ENCODE measurements at regions of chr17 and their contacts with region 1.

Region 1: DNA sequence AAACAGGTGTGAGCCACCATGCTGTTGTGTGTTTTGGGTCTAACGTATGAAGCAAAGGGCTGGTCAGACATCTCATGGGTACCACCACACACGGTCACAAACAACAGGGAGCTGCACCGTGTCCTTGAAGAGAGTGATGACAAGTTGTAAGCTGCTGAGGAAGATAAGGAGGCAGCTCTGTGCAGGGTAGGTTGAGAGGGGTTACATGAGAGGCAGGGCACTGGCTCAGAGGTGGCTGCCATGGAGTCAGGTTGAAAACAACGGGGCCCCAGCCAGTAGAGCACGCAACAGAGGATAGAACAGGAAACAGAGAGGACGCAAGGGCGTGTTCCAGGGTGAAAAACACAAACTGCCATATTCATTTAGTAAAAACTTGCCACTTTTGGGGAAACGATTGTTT is 52.2 kb downstream of the TRARG1 start:
- DNase-seq: peak; percentile 47
- ATAC-seq: peak; percentile 73
- H3K4me3 Mint-ChIP-seq: no peak overlapping the region
- H3K27ac Mint-ChIP-seq: peak overlapping the region; percentile 50
- H3K4me1 Mint-ChIP-seq: peaks cover 10% of the 10 kb centered on the region
- H3K27me3 Mint-ChIP-seq: peaks cover 5% of the 10 kb centered on the region

Region 2: GRCh38 chr17:915538-916201 is 416.0 kb before region 1 on chr17:
- CTCF ChIA-PET with region 1: no interaction called
- POLR2A ChIA-PET with region 1: no interaction called
- DNase-seq: no peak
- ATAC-seq: no peak
- H3K4me3 Mint-ChIP-seq: no peak overlapping the region
- H3K27ac Mint-ChIP-seq: no peak overlapping the region
- H3K4me1 Mint-ChIP-seq: no peaks in the 10 kb centered on the region
- H3K27me3 Mint-ChIP-seq: peaks cover 9% of the 10 kb centered on the region

Region 3: GRCh38 chr17:1260086-1260769 is 71.5 kb before region 1 on chr17:
- CTCF ChIA-PET with region 1: interaction called, 35 read pairs
- POLR2A ChIA-PET with region 1: no interaction called
- DNase-seq: no peak
- ATAC-seq: no peak
- H3K4me3 Mint-ChIP-seq: no peak overlapping the region
- H3K27ac Mint-ChIP-seq: no peak overlapping the region
- H3K4me1 Mint-ChIP-seq: peaks cover 44% of the 10 kb centered on the region
- H3K27me3 Mint-ChIP-seq: peaks cover 20% of the 10 kb centered on the region

Region 4: DNA sequence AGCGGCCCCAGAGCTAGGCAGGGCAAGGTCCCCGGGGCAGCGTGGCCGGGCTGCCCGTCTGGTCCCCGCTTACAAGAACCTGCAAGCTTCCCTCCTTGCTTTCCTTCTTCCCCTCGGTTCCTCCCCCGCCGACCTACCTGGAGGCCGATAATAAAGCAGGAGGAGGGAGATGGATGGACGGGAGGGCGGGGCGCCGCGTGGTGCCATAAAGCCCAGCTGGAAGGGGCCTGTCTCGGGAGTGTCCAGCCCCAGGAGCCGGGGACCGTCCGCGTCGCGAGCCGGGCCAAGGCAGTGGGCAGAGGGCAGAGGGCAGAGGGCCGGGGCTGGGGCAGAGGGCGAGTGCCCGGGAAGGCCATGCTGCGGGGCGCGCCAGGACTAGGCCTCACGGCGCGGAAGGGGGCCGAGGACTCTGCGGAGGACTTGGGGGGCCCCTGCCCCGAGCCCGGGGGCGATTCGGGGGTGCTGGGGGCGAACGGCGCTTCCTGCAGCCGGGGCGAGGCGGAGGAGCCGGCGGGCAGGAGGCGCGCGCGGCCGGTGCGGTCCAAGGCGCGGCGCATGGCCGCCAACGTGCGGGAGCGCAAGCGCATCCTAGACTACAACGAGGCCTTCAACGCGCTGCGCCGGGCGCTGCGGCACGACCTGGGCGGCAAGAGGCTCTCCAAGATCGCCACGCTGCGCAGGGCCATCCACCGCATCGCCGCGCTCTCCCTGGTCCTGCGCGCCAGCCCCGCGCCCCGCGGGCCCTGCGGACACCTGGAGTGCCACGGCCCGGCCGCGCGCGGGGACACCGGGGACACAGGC is 61.3 kb before region 1 on chr17 and contains the start of gene BHLHA9:
- CTCF ChIA-PET with region 1: interaction called, 10 read pairs
- POLR2A ChIA-PET with region 1: no interaction called
- DNase-seq: no peak
- ATAC-seq: no peak
- H3K4me3 Mint-ChIP-seq: peak within 1 kb of the TSS; percentile 85
- H3K27ac Mint-ChIP-seq: no peak within 1 kb of the TSS
- H3K4me1 Mint-ChIP-seq: peaks cover 16% of the 10 kb centered on the region
- H3K27me3 Mint-ChIP-seq: peaks cover 44% of the 10 kb centered on the region
- total RNA-seq, gene BHLHA9: not detected

Region 5: GRCh38 chr17:1275962-1276736 is 55.6 kb before region 1 on chr17:
- CTCF ChIA-PET with region 1: interaction called, 45 read pairs
- POLR2A ChIA-PET with region 1: no interaction called
- DNase-seq: peak; percentile 80
- ATAC-seq: peak; percentile 87
- H3K4me3 Mint-ChIP-seq: peak overlapping the region; percentile 46
- H3K27ac Mint-ChIP-seq: peak overlapping the region; percentile 48
- H3K4me1 Mint-ChIP-seq: peaks cover 10% of the 10 kb centered on the region
- H3K27me3 Mint-ChIP-seq: peaks cover 24% of the 10 kb centered on the region

Region 6: DNA sequence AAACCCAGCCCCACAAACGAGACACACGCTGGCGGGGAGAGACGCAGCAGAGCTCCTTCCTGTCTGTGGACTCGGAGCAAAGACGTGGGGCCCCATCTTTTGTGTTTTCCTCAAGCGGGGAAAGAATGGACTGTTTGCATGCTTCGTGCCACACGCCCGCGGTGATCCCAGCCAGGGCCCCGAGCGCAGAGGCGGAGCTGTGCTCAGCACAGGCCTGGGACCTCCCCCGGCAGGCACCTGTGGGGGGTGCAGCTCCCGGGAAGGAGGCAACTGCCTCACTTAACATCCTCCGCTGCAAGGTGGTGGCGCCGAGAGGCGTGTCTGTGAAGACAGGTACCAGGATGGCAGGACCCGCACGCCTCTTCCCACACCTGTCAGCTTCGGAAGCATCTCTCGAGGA is 33.1 kb before region 1 on chr17:
- CTCF ChIA-PET with region 1: interaction called, 13 read pairs
- POLR2A ChIA-PET with region 1: no interaction called
- DNase-seq: peak; percentile 59
- ATAC-seq: peak; percentile 45
- H3K4me3 Mint-ChIP-seq: peak overlapping the region; percentile 36
- H3K27ac Mint-ChIP-seq: peak overlapping the region; percentile 46
- H3K4me1 Mint-ChIP-seq: peaks cover 60% of the 10 kb centered on the region
- H3K27me3 Mint-ChIP-seq: peaks cover 12% of the 10 kb centered on the region

Region 7: GRCh38 chr17:1413281-1413791 is 81.6 kb after region 1 on chr17:
- CTCF ChIA-PET with region 1: no interaction called
- POLR2A ChIA-PET with region 1: no interaction called
- DNase-seq: no peak
- ATAC-seq: no peak
- H3K4me3 Mint-ChIP-seq: no peak overlapping the region
- H3K27ac Mint-ChIP-seq: no peak overlapping the region
- H3K4me1 Mint-ChIP-seq: no peaks in the 10 kb centered on the region
- H3K27me3 Mint-ChIP-seq: no peaks in the 10 kb centered on the region

Region 8: DNA sequence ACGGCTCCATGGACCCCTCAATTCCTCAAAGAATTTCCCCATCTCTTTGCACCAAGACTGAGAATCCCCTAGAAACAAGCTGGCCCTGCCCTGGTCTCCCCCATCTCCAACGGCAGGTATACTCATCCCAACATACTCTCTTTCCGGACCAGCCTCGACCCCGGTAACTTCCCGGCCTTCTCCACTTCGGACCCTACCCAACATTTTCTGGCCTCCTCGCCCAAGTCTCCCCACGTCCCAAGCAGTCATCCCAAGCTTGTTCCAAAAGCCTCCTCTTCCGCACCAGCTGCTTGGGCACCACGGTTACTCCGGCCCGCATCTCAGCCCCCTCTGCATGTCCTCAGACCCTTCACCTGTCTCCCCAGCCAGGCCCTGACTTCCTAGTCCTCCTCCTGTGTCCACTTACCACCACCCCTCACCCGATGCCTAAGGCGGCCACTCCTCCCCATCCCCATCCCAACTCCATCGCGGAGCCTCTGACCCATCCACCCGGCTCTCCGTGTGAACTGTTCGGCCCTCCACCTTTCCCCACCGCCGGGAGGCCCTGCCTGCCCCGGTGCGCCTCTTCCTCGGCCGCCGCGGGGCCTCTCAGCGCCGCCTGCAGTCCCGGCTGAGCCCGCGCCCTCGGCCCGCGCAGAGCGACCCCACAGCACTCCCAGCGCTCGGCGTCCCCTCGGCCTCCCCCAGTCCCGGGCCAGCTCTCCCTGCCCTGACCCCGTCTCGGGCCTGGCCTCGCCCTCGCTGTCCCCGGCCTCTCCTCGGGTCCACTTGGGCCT is 229.9 kb after region 1 on chr17:
- CTCF ChIA-PET with region 1: no interaction called
- POLR2A ChIA-PET with region 1: no interaction called
- DNase-seq: peak; percentile 45
- ATAC-seq: peak; percentile 59
- H3K4me3 Mint-ChIP-seq: peak overlapping the region; percentile 77
- H3K27ac Mint-ChIP-seq: peak overlapping the region; percentile 78
- H3K4me1 Mint-ChIP-seq: peaks cover 34% of the 10 kb centered on the region
- H3K27me3 Mint-ChIP-seq: peaks cover 7% of the 10 kb centered on the region

Measured in activated CD8-positive, alpha-beta T cell treated with anti-CD3 and anti-CD28 coated beads, Interleukin-2, amount 10 ng/mL, durations not matched to agents 7 days and 5 days (primary cell).